Adrenal gland (tissue), 19 donors: ENCODE measurements at regions of chr1 and their contacts with region 1.

Region 1: DNA sequence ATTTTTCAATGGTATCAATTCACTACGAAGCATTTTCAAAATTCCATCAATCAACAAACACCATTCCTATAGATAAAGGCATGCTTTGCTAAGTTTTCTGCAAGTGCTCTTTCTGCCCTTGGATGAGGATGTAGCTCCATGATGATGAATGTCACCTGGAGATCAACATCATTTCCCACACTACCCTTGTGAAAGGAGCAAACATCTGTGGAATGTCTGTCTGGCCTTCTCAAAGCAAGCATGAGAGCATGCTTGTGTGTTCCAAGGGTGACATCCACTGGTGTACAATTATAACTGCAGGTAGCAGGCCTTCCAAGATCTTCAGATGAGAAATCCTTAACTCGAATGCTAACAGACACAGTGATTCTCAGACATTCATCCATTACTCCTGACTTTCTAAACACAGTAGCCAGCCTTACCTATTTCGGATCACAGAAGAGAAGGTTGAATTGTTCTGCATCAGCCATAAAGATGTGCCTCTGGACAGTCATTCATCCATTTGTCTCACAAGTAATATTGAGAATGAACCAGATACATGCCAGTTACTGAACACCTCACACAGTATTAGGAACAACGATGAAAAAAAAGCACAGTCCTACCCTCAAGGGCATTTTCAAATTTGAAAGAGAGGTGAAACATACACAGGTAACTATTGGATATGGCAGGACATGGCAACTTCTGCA is 162.4 kb downstream of the TPR start:
- DNase-seq: peak; percentile 43 to 73 (median 63)
- H3K4me3 ChIP-seq: no peak overlapping the region
- H3K27ac ChIP-seq: no peak overlapping the region
- H3K4me1 ChIP-seq: no peaks in the 10 kb centered on the region
- H3K27me3 ChIP-seq: no peaks in the 10 kb centered on the region
- CTCF ChIP-seq: peak; percentile 61 to 96 (median 90)
- POLR2A ChIP-seq: no peak

Region 2: GRCh38 chr1:185720633-185721272 is 491.9 kb before region 1 on chr1:
- intact Hi-C with region 1: loop called in 1 of 2 experiments (anchors 10 kb)
- DNase-seq: no peak
- H3K4me3 ChIP-seq: no peak overlapping the region
- H3K27ac ChIP-seq: no peak overlapping the region
- H3K4me1 ChIP-seq: no peaks in the 10 kb centered on the region
- H3K27me3 ChIP-seq: no peaks in the 10 kb centered on the region
- CTCF ChIP-seq: peak; percentile 39 to 60 (median 48)
- POLR2A ChIP-seq: no peak

Region 3: DNA sequence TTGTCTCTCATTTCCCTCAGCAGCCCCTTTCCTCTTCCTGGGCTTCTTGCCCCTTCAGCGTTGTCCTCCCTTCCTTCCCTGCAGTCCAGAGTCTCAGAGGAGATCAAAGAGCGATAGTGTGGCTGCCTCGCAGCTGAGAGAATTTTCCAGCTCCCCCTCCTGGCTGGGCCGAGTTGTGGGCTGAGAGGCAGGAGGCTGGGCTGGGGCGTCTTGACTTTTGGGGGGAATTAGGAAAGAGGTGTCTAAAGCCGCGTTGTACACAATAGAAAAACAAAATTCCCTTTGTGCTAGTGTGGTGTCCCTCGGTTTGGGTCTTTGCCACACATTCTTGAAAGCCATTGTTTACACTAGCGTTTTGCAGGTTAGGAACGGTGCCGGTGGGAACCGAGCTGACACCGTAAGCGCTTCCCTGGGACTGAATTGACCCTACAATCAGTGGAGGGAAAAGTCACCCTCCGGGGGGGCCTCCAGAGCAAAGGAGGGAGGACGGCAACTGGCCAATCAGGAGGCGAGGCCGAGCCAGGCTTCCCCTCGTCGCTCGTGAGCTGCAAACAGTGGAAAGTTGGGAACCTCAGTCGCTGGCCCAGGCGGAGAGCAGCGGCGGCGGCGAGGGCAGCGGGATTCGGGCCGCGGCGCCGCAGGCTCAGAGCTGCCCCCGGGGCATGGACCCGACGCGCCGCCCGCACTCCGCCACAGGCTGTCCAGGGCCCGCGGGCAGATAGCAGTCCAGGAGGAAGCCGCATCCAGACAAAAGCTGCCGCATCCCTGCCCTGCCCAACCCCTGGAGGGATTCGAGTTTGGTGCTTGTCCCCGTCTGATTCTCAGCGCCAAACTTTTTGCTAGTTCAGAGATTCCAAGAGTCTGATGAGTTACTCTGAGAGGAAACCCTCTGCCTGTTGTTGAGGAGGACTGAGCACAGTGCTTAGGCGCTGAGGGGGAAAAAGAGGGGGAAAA is 478.6 kb before region 1 on chr1 and contains the start of gene HMCN1:
- intact Hi-C with region 1: loop called (anchors 10 kb)
- DNase-seq: peak; percentile 60 to 78 (median 73)
- H3K4me3 ChIP-seq: peak within 1 kb of the TSS in 2 of 4 donors; percentile 23 to 57
- H3K27ac ChIP-seq: peak within 1 kb of the TSS in 2 of 5 donors; percentile 31 to 56
- H3K4me1 ChIP-seq: peaks cover 0 to 9% of the 10 kb centered on the region in 2 donors
- H3K27me3 ChIP-seq: no peaks in the 10 kb centered on the region
- CTCF ChIP-seq: peak in 3 of 6 experiments; percentile 14 to 23 (median 15)
- POLR2A ChIP-seq: peak in 1 of 2 donors; percentile 49
- total RNA-seq, gene HMCN1: 0.83 to 5.8 (median 3.0) TPM

Region 4: DNA sequence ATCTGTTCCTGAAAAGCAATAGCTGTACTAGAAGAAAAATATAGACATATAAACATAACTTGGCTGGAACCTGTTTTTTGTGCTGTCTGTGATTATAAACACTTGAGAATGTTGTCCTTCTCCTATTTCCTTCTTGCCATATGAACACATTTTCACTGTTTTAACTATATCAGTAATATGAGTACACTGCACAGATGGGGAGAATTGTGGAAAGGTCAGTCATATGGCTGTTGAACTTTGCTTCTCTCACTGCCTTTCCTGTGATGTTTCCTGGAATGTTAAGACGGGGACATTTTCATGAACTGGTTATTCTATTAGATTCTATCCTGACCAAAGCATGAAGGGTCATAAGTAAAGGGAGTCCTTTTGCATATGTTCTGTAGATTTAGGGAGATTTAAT is 453.6 kb before region 1 on chr1:
- intact Hi-C with region 1: no loop called
- DNase-seq: no peak
- H3K4me3 ChIP-seq: no peak overlapping the region
- H3K27ac ChIP-seq: no peak overlapping the region
- H3K4me1 ChIP-seq: no peaks in the 10 kb centered on the region
- H3K27me3 ChIP-seq: no peaks in the 10 kb centered on the region
- CTCF ChIP-seq: no peak
- POLR2A ChIP-seq: no peak

Region 5: GRCh38 chr1:185813401-185813979 is 399.2 kb before region 1 on chr1:
- intact Hi-C with region 1: loop called in 1 of 2 experiments (anchors 5 kb)
- DNase-seq: peak in 1 of 7 donors; percentile 40
- H3K4me3 ChIP-seq: no peak overlapping the region
- H3K27ac ChIP-seq: no peak overlapping the region
- H3K4me1 ChIP-seq: no peaks in the 10 kb centered on the region
- H3K27me3 ChIP-seq: no peaks in the 10 kb centered on the region
- CTCF ChIP-seq: peak; percentile 42 to 62 (median 54)
- POLR2A ChIP-seq: no peak